Activated T-helper 2 cell treated with anti-CD3 and anti-CD28 coated beads, Interferon-gamma antibody, Interleukin-2, Interleukin-4, amounts not matched to agents 10 μg/mL and 5 μg/mL and 100 μg/mL, durations not matched to agents 14 hours and 24 hours and 36 hours (primary cell): ENCODE measurements at regions of chr6 and their contacts with region 1.

Region 1: GRCh38 chr6:37018198-37019064 is 13.0 kb downstream of the FGD2 start:
- DNase-seq: peak; percentile 87
- H3K4me3 Mint-ChIP-seq: no peak overlapping the region
- H3K27ac Mint-ChIP-seq: peak overlapping the region; percentile 78
- H3K4me1 Mint-ChIP-seq: peaks cover 46% of the 10 kb centered on the region
- H3K27me3 Mint-ChIP-seq: no peaks in the 10 kb centered on the region

Region 2: DNA sequence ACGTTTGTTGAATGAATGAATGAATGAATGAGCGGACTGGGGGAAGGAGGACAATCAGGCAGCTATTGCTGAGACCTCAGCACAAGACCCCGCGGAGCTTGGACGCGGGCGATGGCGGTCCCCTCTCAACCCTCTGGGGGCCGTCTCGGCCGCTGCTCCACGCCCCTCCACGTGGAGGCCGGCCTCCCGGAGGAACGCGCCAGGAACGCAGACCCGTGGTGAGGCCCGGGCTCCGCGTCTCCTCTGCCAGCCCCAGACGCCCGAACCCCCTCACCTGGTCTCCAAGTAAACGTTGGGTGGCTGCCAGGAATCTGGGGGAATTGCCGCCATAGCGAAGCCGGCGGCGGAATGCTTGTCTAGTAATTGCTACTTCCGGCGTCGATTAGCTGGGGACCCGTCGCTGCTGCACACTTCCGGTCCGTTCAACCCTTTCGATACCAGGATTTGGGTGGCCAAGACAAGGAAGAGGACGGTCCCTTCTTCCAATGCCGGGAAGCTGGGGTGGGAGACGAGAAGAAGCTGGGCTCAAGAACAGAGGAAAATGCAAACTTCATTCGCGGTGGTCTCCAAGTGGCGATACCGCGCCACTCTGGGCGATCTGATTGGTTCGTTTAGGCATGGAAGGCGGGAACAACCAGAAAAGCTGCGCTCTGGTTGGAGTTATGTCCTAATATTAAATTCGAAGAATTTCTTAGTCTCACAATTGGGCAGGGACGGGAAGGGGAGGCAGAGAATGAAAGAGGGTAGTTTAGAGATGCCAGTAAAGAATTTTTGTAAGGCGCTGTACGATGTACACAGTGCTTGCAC is 143.8 kb before region 1 on chr6 and contains the start of gene PPIL1:
- intact Hi-C with region 1: loop called (anchors 1 kb)
- DNase-seq: peak; percentile 80
- H3K4me3 Mint-ChIP-seq: peak within 1 kb of the TSS; percentile 99
- H3K27ac Mint-ChIP-seq: peak within 1 kb of the TSS; percentile 100
- H3K4me1 Mint-ChIP-seq: peaks cover 48% of the 10 kb centered on the region
- H3K27me3 Mint-ChIP-seq: peaks cover 3% of the 10 kb centered on the region
- total RNA-seq, gene PPIL1: 52.4 and 54.8 TPM in 2 replicates

Region 3: DNA sequence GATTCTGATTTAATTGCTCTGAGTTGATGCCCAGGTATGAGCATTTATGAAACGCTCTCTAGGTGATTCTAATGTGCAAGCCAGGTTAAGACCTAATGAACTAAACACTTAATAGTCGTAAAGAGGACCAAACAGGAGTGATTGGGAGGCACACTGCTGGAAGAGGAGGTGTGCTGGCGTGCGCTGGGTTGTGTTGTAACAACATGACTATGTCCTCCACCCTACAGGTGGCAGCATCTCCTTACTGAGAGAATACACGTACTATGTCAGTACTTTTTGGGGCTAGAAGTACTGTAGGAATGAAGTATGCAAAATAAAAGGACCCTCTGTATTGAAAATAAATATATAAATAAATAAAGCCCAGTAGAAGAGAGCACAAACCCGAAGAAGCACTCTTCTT is 120.8 kb before region 1 on chr6:
- intact Hi-C with region 1: loop called (anchors 1 kb)
- DNase-seq: no peak
- H3K4me3 Mint-ChIP-seq: no peak overlapping the region
- H3K27ac Mint-ChIP-seq: no peak overlapping the region
- H3K4me1 Mint-ChIP-seq: peaks cover 12% of the 10 kb centered on the region
- H3K27me3 Mint-ChIP-seq: no peaks in the 10 kb centered on the region

Region 4: GRCh38 chr6:36929607-36930006 is 88.8 kb before region 1 on chr6:
- intact Hi-C with region 1: no loop called
- DNase-seq: no peak
- H3K4me3 Mint-ChIP-seq: no peak overlapping the region
- H3K27ac Mint-ChIP-seq: no peak overlapping the region
- H3K4me1 Mint-ChIP-seq: peaks cover 26% of the 10 kb centered on the region
- H3K27me3 Mint-ChIP-seq: no peaks in the 10 kb centered on the region

Region 5: GRCh38 chr6:36968266-36968977 is 50.0 kb before region 1 on chr6:
- intact Hi-C with region 1: no loop called
- DNase-seq: no peak
- H3K4me3 Mint-ChIP-seq: no peak overlapping the region
- H3K27ac Mint-ChIP-seq: peak overlapping the region; percentile 17
- H3K4me1 Mint-ChIP-seq: peaks cover 8% of the 10 kb centered on the region
- H3K27me3 Mint-ChIP-seq: no peaks in the 10 kb centered on the region

Region 6: DNA sequence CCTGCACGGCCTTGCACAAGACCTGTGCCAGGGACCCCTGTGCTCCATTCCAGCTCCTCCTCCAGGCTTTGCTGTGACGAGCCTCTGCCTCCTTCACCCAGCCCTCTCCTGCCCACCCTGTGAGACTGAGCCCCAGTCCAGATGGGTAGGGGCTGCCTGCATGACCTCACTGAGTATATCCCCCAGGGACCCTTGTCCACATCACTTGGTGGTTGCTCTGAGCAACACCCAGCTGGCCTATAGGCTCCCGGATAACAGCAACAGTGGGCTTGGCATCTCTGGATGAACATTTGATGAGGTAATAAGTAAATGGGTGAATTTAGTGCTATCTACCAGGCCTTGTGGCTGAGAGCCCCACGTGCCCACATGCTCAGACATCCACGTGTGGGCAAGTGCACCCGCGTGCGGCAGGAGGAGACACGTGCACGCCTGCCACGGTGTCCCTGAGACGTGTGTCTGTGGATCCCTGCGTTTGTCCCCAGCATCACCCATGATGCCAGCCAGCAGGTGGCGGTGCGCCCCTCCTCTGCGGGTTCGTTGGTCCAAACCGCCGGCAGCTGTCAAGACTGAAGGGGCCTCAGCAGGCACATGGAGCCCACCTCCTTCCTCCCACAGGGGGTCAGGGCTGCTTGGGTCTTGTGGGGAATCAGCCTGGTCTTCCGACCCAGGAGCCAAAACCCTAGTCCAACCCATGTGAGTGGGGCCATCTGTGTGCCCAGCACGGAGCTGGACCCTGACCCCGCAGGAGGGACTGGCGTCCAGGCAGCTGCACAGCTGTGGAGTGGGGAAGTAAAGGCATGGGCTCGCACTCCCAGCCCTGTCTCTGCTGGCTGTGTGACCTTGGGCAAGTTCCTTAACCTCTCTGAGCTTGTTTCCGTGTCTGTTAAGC is 33.0 kb after region 1 on chr6:
- intact Hi-C with region 1: loop called (anchors 5 kb)
- DNase-seq: peak; percentile 77
- H3K4me3 Mint-ChIP-seq: peak overlapping the region; percentile 47
- H3K27ac Mint-ChIP-seq: peak overlapping the region; percentile 99
- H3K4me1 Mint-ChIP-seq: peaks cover 54% of the 10 kb centered on the region
- H3K27me3 Mint-ChIP-seq: no peaks in the 10 kb centered on the region

Region 7: DNA sequence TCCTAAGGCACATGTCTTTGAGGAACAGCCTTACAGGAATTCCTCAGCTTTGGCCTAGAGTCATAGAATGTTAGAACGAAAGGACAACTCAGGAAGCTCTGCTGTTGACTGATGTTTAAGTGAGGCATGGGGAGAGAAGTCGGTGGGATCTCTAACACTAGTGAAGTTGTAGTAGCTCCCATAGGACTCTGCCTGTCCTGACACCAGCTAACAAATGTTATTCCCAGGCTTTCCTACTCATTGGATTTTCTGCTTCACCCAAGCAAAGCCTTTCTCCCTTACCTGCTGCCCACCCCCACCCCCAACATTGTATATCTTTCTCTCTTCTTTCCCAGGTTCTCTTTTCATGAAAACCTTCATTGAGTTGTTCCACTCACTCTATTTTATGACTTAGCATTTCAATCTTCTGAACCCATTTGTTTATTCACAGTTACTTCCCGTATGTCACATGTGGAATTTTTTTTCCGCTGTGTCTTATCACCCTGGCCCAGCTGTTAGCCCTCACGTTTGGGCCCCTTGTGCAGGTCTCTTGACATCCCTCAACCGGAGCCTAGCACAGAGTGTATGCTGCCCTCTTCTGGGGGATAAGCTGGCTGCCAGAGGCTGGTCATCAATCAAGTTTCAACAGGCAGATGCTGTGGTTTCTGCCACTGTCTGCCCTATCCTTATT is 296.2 kb after region 1 on chr6:
- intact Hi-C with region 1: loop called (anchors 10 kb)
- DNase-seq: peak; percentile 23
- H3K4me3 Mint-ChIP-seq: no peak overlapping the region
- H3K27ac Mint-ChIP-seq: no peak overlapping the region
- H3K4me1 Mint-ChIP-seq: peaks cover 6% of the 10 kb centered on the region
- H3K27me3 Mint-ChIP-seq: no peaks in the 10 kb centered on the region

Region 8: DNA sequence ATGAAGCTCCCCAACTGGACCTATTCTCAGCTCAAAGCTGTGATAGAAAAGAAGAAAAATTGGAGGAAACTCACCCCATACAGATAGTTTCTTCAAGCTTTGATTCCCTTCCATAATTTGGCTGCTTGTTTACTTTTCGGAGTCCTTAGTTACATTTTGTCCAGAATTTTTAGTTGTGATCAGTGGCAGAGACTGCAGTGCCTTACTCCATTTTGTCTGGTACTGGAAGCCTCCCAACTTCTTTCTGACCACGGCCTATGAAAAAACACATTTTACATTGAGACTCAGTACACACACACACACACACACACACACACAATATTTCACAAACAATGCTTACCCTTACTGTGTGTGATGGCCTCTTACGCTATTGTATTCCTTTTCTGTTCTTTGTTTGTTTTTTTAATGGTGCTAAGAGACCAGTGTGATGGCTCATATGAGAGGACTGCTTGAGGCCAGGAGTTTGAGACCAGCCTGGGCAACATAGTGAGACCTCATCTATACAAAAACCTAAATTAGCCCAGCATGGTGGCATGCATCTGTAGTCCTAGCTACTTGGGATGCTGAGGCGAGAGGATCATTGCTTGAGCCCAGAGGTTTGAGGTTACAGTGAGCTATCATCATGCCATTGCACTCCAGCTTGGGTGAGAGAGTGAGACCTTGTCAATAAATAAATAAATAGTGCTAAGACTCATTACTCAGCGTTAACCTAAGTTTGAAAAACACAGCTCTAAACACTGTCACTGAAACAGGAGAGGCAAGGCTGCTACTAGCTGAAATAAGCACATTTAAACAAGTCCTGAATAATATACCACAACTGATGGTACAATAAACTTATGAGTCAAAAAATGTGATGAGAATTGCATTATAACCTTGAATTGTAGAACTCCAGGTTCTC is 321.6 kb after region 1 on chr6:
- intact Hi-C with region 1: no loop called
- DNase-seq: no peak
- H3K4me3 Mint-ChIP-seq: no peak overlapping the region
- H3K27ac Mint-ChIP-seq: no peak overlapping the region
- H3K4me1 Mint-ChIP-seq: peaks cover 4% of the 10 kb centered on the region
- H3K27me3 Mint-ChIP-seq: peaks cover 13% of the 10 kb centered on the region